HEK293 (cell line): ENCODE measurements at regions of chr6 and their contacts with region 1.

Region 1: GRCh38 chr6:150368762-150369161 is at the start of gene IYD:
- H3K4me3 ChIP-seq: no peak within 1 kb of the TSS
- H3K27ac ChIP-seq: no peak within 1 kb of the TSS
- H3K4me1 ChIP-seq: no peaks in the 10 kb centered on the region; the same call in 1 of the 2 replicates
- CTCF ChIP-seq: no peak

Region 2: DNA sequence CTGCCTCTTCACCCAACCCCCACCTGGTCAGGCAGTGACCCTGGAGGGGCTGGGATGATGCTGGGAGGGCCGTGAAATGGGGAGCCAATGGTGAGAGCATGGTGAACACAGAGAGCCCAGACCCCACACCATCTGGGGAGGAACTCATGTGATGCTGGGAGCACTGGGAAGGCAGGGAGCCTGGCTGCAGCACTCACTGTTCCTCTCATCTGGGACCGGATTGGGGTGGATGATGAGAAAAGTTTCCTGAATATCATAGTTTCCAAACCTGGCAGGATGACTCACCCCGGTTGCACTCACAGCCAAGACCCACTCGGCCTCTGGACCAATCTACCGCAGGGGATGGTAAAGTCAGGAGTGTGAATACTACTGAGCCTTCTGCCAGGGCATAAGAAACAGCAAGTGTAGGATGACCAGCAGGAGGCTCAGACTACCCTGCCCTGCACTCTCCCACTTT is 383.3 kb before region 1 on chr6:
- CTCF ChIA-PET with region 1: no interaction called
- POLR2A ChIA-PET with region 1: interaction called, 10 read pairs
- H3K4me3 ChIP-seq: no peak overlapping the region
- H3K27ac ChIP-seq: no peak overlapping the region
- H3K4me1 ChIP-seq: peaks cover 6% of the 10 kb centered on the region
- CTCF ChIP-seq: no peak

Region 3: GRCh38 chr6:150211700-150212511 is 156.9 kb before region 1 on chr6:
- CTCF ChIA-PET with region 1: no interaction called
- POLR2A ChIA-PET with region 1: no interaction called
- H3K4me3 ChIP-seq: no peak overlapping the region
- H3K27ac ChIP-seq: no peak overlapping the region
- H3K4me1 ChIP-seq: peaks cover 11% of the 10 kb centered on the region
- CTCF ChIP-seq: no peak

Region 4: GRCh38 chr6:150343434-150343833 is 25.3 kb before region 1 on chr6:
- CTCF ChIA-PET with region 1: no interaction called
- POLR2A ChIA-PET with region 1: no interaction called
- H3K4me3 ChIP-seq: no peak overlapping the region
- H3K27ac ChIP-seq: no peak overlapping the region
- H3K4me1 ChIP-seq: no peaks in the 10 kb centered on the region; the same call in 1 of the 2 replicates
- CTCF ChIP-seq: no peak

Region 5: DNA sequence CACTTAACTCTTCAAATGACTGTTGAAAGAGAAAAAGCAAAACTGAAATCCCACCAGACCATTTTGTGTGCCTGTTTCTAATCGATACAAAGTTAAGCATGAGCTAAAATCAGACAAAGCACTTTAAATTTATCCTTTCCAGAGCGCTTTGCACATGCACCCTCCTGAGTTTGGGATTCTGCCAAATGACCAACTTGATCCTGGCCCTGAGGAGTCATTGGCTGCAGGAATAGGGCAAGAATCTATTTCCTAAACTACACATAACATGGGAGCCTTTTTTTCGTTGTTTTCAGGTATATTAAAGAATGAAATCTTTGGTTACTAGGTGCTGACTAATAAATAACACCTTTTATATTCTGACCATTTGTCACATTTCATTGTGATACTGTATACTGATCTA is 472.9 kb after region 1 on chr6:
- CTCF ChIA-PET with region 1: no interaction called
- POLR2A ChIA-PET with region 1: no interaction called
- H3K4me3 ChIP-seq: no peak overlapping the region
- H3K27ac ChIP-seq: no peak overlapping the region
- H3K4me1 ChIP-seq: 0 out of 2 replicates have a peak, but pooled peaks cover 2% of the 10 kb centered on the region
- CTCF ChIP-seq: no peak